Esophagus muscularis mucosa (tissue), 4 donors: ENCODE measurements at regions of chr4 and their contacts with region 1.

Region 1: GRCh38 chr4:155442267-155443105 is 65.7 kb upstream of the MAP9 start:
- DNase-seq: peak; percentile 94
- H3K4me3 ChIP-seq: peak overlapping the region in 3 of 4 donors; percentile 28 to 34 (median 33)
- H3K27ac ChIP-seq: peak overlapping the region in 3 of 4 donors; percentile 5 to 45 (median 24)
- H3K4me1 ChIP-seq: peaks cover 0 to 14% (median 8%) of the 10 kb centered on the region in 4 donors
- H3K27me3 ChIP-seq: no peaks in the 10 kb centered on the region
- CTCF ChIP-seq: peak; percentile 93 to 98 (median 93)
- EP300 ChIP-seq: no peak
- POLR2A ChIP-seq: no peak

Region 2: DNA sequence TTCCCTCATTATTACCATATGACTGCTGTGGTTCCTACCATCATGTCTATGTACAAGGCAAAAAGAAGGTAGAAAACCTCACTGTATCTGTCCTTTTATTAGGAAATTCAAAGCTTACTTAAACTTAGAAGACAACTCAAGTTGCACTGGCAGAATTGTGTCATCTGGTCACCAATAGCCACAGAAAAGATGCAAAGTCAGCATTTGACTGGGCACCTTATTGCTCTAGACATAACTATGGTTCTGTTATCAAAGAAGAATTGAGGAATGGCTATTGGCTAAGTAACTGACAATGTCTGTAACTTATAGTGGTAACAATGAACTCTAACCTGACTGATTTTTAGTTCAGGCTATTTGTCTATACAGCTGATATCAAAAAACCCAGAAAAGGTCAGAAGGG is 111.0 kb before region 1 on chr4:
- intact Hi-C with region 1: no loop called
- DNase-seq: no peak
- H3K4me3 ChIP-seq: no peak overlapping the region
- H3K27ac ChIP-seq: no peak overlapping the region
- H3K4me1 ChIP-seq: no peaks in the 10 kb centered on the region
- H3K27me3 ChIP-seq: no peaks in the 10 kb centered on the region
- CTCF ChIP-seq: no peak
- EP300 ChIP-seq: no peak
- POLR2A ChIP-seq: no peak

Region 3: DNA sequence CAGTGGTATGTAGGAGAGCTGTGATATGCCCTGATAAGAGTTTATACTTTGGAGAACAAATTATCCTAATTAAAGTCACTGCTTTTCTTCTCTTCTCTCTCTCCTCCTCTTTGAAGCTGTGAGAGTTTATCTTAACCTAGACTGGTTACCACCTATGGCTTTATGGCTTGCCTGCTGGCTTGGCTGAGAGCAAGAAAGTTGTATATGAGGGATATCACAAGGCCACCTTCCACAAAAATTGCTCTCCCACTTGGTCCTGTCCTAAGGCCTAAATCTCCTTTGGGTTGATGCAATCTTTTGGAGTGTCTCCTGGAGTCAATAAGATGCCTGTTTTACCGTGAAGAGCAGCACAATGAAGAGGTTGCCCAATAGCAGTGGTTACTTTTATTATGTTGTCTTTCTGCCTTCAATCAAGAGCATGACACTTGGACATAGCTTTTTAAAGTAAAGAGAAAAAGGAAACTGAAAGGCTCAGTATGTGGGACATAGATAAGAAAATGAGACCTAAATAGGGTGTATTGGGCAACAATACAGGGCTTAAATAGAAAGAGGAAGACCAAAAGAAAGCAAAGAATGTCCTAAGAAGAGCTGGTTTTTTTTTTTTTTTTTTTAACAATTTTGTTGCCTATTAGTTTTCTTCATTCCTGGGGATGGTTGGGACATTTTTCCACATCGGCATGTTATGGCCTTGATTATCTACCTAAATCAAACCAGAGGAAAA is 233.4 kb after region 1 on chr4:
- intact Hi-C with region 1: loop called (anchors 10 kb)
- DNase-seq: no peak
- H3K4me3 ChIP-seq: no peak overlapping the region
- H3K27ac ChIP-seq: peak overlapping the region; percentile 23 to 65 (median 37)
- H3K4me1 ChIP-seq: peaks cover 11 to 53% (median 27%) of the 10 kb centered on the region in 4 donors
- H3K27me3 ChIP-seq: no peaks in the 10 kb centered on the region
- CTCF ChIP-seq: no peak
- EP300 ChIP-seq: no peak
- POLR2A ChIP-seq: no peak

Region 4: GRCh38 chr4:155787113-155787710 is 344.7 kb after region 1 on chr4:
- intact Hi-C with region 1: loop called (anchors 2 kb)
- DNase-seq: no peak
- H3K4me3 ChIP-seq: no peak overlapping the region
- H3K27ac ChIP-seq: no peak overlapping the region
- H3K4me1 ChIP-seq: peaks cover 10 to 40% (median 25%) of the 10 kb centered on the region in 4 donors
- H3K27me3 ChIP-seq: no peaks in the 10 kb centered on the region
- CTCF ChIP-seq: peak; percentile 68 to 72 (median 70)
- EP300 ChIP-seq: no peak
- POLR2A ChIP-seq: no peak

Region 5: GRCh38 chr4:155953151-155954114 is 510.9 kb after region 1 on chr4 and contains the start of gene CTSO:
- intact Hi-C with region 1: loop called (anchors 5 kb)
- DNase-seq: peak; percentile 93
- H3K4me3 ChIP-seq: peak within 1 kb of the TSS; percentile 67 to 81 (median 78)
- H3K27ac ChIP-seq: peak within 1 kb of the TSS; percentile 94 to 98 (median 96)
- H3K4me1 ChIP-seq: peaks cover 4 to 20% (median 14%) of the 10 kb centered on the region in 4 donors
- H3K27me3 ChIP-seq: no peaks in the 10 kb centered on the region
- CTCF ChIP-seq: peak; percentile 61 to 65 (median 62)
- EP300 ChIP-seq: no peak
- POLR2A ChIP-seq: peak; percentile 10
- total RNA-seq, gene CTSO: 18.8 to 22.8 (median 21.3) TPM